PC-3 (cell line): ENCODE measurements at regions of chr12 and their contacts with region 1.

Region 1: DNA sequence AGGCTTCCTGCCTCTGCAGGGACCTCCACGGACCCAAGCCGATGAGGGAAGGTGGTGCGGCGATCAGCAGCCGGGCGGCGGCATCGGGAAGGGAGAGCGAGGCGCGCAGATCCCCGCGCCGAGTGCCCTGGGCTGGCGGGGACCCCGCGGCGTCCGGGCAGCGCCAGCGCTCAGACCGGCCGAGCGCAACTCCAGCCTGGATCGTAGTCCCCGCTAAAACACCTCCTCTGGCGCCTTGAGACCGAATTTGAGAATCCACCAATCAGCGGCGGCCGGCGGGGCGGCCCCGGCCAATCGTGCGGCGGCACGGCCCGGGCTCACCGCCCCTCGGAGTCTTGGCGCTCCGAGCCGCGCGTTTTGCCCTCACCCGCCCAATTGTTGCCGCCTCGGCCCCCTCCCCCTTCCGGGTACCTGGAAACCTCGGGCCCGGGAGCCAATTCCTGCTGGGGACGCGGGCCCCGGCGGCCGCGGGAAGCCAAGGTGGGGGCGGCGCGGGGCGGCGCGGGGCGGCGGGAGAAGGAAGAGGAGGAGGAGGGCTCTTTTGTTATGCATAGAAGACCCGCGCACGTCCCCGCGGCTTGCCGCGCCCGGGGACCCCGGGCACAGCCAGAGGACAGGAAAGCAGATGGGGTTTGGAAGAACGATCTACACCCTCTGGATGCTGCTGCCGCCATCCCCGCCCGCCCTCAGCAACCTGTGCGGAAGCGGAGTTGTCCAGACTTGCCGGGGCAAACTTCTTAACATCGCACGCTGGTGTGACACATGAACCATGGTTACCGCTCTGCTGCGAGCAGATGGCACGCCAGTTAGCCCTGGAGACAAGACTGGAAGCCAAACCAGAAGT is at the start of gene E2F7:
- DNase-seq: peak; percentile 97
- ATAC-seq: peak; percentile 83
- H3K4me3 ChIP-seq: peak within 1 kb of the TSS; percentile 94
- H3K27ac ChIP-seq: peak within 1 kb of the TSS; percentile 84
- H3K4me1 ChIP-seq: peaks cover 35% of the 10 kb centered on the region
- H3K27me3 ChIP-seq: no peaks in the 10 kb centered on the region
- CTCF ChIP-seq: no peak
- total RNA-seq, gene E2F7: 17.2 and 19.0 TPM in 2 replicates

Region 2: DNA sequence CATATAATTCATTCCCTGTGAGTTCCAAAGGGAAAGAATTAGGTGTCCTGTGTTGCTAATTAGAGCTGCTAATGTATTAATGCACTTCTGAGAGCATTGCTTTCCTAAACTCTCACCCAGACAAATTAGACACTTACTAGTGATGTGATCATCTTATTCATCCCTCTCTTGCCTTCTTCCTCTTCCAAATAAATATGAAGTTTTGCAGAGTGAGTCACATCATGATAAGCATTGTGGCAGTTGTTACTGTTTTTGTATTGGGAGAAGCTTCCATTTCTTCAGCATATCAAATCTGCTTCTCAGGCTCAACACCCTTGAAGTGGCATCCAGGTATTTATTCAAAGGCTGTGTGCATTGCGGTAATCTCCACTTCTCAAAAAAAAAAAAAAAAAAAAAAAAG is 37.1 kb after region 1 on chr12:
- CTCF ChIA-PET with region 1: no interaction called
- POLR2A ChIA-PET with region 1: no interaction called
- intact Hi-C with region 1: loop called (anchors 5 kb)
- DNase-seq: peak; percentile 81
- ATAC-seq: peak; percentile 92
- H3K4me3 ChIP-seq: no peak overlapping the region
- H3K27ac ChIP-seq: no peak overlapping the region
- H3K4me1 ChIP-seq: peaks cover 20% of the 10 kb centered on the region
- H3K27me3 ChIP-seq: no peaks in the 10 kb centered on the region
- CTCF ChIP-seq: no peak

Region 3: DNA sequence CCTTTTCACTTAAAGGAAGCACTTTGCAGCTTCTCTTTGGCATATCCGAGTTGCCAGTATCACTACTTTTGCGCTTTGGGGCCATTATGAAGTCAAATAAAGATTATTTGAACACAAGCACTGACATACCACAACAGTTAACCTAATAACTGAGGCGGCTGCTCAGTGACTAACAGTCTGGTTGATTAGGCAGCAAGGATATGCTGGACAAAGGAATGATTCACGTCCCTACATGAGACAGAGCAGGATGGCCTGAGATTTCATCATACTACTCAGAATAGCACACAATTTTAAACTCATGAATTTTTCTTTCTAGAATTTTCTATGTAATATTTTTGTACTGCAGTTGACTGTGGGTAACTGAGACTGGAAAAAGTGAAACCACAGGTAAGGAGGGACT is 56.7 kb after region 1 on chr12:
- CTCF ChIA-PET with region 1: no interaction called
- POLR2A ChIA-PET with region 1: no interaction called
- intact Hi-C with region 1: loop called (anchors 1 kb)
- DNase-seq: peak; percentile 90
- ATAC-seq: peak; percentile 86
- H3K4me3 ChIP-seq: peak overlapping the region; percentile 16; the same call in 1 of the 2 replicates
- H3K27ac ChIP-seq: peak overlapping the region; percentile 94
- H3K4me1 ChIP-seq: peaks cover 44% of the 10 kb centered on the region
- H3K27me3 ChIP-seq: no peaks in the 10 kb centered on the region
- CTCF ChIP-seq: no peak

Region 4: DNA sequence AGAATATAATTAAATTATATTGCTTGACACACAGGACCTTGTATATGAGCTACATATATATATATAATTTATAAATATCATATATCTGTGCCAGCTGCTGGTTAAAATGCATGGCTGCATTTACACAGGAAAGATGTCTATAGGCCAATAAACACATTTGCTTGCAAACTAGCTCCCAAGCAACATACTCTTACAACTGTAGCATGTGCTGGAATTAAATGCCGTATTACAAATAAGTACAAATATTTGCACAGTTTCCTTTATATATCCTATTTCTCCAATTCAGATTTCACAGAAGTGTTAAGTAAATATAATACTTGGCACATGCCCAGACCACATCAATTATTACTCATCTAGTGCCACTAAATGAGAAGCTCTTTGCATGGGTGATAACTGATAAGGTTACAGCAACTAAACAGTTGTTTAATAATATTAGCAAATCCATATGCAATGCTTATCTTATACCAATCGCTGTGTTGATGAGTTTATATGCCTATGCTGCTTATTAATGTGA is 66.5 kb after region 1 on chr12:
- CTCF ChIA-PET with region 1: no interaction called
- POLR2A ChIA-PET with region 1: no interaction called
- intact Hi-C with region 1: loop called (anchors 1 kb)
- DNase-seq: peak; percentile 77
- ATAC-seq: peak; percentile 92
- H3K4me3 ChIP-seq: no peak overlapping the region
- H3K27ac ChIP-seq: no peak overlapping the region
- H3K4me1 ChIP-seq: no peaks in the 10 kb centered on the region; the same call in 1 of the 2 replicates
- H3K27me3 ChIP-seq: no peaks in the 10 kb centered on the region
- CTCF ChIP-seq: no peak

Region 5: DNA sequence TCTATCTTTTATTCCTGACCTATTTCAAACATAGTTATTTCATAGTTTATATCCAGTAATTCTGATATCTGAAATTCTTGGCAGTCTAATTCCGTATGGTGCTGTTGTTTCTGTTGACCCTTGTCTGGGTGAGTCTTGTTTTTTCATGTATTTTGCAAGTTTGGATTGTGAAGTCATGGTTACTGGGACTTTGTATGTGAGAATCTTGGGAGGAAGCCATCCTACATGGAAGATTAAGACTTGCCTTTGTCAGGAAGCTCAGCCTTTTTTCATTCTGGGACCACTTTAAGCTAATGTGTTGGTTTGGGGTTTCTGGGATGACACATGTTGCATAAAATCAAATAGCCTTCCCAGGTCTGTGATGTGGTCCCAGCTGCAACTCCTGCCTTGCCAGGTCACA is 191.4 kb after region 1 on chr12:
- CTCF ChIA-PET with region 1: no interaction called
- POLR2A ChIA-PET with region 1: interaction called, 11 read pairs
- intact Hi-C with region 1: no loop called
- DNase-seq: no peak
- ATAC-seq: no peak
- H3K4me3 ChIP-seq: no peak overlapping the region
- H3K27ac ChIP-seq: no peak overlapping the region
- H3K4me1 ChIP-seq: no peaks in the 10 kb centered on the region
- H3K27me3 ChIP-seq: peaks cover 10% of the 10 kb centered on the region
- CTCF ChIP-seq: no peak

Region 6: GRCh38 chr12:77324763-77325468 is 259.3 kb after region 1 on chr12:
- CTCF ChIA-PET with region 1: no interaction called
- POLR2A ChIA-PET with region 1: no interaction called
- intact Hi-C with region 1: loop called (anchors 10 kb)
- DNase-seq: peak; percentile 76
- ATAC-seq: peak; percentile 98
- H3K4me3 ChIP-seq: peak overlapping the region; percentile 78
- H3K27ac ChIP-seq: no peak overlapping the region
- H3K4me1 ChIP-seq: peaks cover 4% of the 10 kb centered on the region
- H3K27me3 ChIP-seq: peaks cover 42% of the 10 kb centered on the region
- CTCF ChIP-seq: peak; percentile 65